PC-9 (cell line): ENCODE measurements at regions of chr3 and their contacts with region 1.

Region 1: DNA sequence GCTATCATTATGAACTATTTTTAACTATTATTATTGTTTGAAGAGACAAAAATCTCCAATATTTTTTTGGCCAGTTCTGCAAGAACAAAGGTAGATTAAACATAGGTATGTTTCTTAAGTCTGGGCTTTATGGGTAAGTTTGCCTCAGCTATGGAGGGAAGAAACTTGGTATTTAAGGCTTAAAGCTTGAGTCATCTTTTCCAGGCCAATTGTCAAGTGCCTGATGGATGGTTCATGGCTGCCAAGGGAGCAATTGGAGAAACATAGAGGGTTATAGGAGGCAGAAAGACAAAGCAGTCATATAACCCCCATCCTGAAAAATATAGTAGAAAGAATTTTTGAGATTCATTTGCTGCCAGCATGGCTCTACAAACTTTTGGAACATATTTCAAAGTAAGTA is 7.2 kb upstream of the STAC start:
- DNase-seq: peak; percentile 32 to 64
- H3K4me3 ChIP-seq: no peak overlapping the region
- H3K27ac ChIP-seq: peak overlapping the region; percentile 78
- H3K4me1 ChIP-seq: peaks cover 26% of the 10 kb centered on the region
- H3K27me3 ChIP-seq: no peaks in the 10 kb centered on the region
- CTCF ChIP-seq: no peak

Region 2: GRCh38 chr3:35760146-35760545 is 612.9 kb before region 1 on chr3:
- CTCF ChIA-PET with region 1: no interaction called
- POLR2A ChIA-PET with region 1: no interaction called
- intact Hi-C with region 1: no loop called
- DNase-seq: no peak
- H3K4me3 ChIP-seq: no peak overlapping the region
- H3K27ac ChIP-seq: no peak overlapping the region
- H3K4me1 ChIP-seq: no peaks in the 10 kb centered on the region
- H3K27me3 ChIP-seq: peaks cover 14% of the 10 kb centered on the region
- CTCF ChIP-seq: no peak

Region 3: DNA sequence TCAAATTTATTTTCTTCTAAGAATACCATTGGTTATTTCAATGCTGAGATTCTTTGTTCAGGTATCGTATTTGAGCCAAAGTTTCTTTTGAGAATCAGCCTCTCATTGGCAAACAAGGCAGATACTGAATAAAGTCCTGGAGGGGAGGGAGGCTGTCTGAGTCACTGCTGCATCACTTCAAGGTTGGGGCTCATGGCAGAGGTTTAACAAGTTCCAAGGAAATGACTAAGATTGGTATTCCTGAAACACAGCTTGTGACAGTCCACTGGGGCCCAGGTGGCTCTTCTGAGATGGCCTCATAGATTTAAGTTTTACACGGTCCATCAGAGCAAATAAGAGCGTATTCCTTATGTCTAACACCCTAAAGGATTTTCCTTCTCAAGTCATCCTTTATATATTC is 206.6 kb before region 1 on chr3:
- CTCF ChIA-PET with region 1: no interaction called
- POLR2A ChIA-PET with region 1: no interaction called
- intact Hi-C with region 1: no loop called
- DNase-seq: peak; percentile 62 to 87
- H3K4me3 ChIP-seq: peak overlapping the region; percentile 6; the same call in 1 of the 2 replicates
- H3K27ac ChIP-seq: peak overlapping the region; percentile 83
- H3K4me1 ChIP-seq: peaks cover 15% of the 10 kb centered on the region
- H3K27me3 ChIP-seq: no peaks in the 10 kb centered on the region
- CTCF ChIP-seq: no peak

Region 4: GRCh38 chr3:36257158-36257852 is 115.8 kb before region 1 on chr3:
- CTCF ChIA-PET with region 1: no interaction called
- POLR2A ChIA-PET with region 1: interaction called, 19 read pairs
- intact Hi-C with region 1: no loop called
- DNase-seq: no peak
- H3K4me3 ChIP-seq: no peak overlapping the region
- H3K27ac ChIP-seq: no peak overlapping the region
- H3K4me1 ChIP-seq: no peaks in the 10 kb centered on the region
- H3K27me3 ChIP-seq: no peaks in the 10 kb centered on the region
- CTCF ChIP-seq: no peak

Region 5: GRCh38 chr3:36403661-36404060 is 30.6 kb after region 1 on chr3:
- CTCF ChIA-PET with region 1: no interaction called
- POLR2A ChIA-PET with region 1: no interaction called
- intact Hi-C with region 1: loop called (anchors 2 kb)
- DNase-seq: no peak
- H3K4me3 ChIP-seq: no peak overlapping the region
- H3K27ac ChIP-seq: no peak overlapping the region
- H3K4me1 ChIP-seq: no peaks in the 10 kb centered on the region
- H3K27me3 ChIP-seq: no peaks in the 10 kb centered on the region
- CTCF ChIP-seq: no peak

Region 6: GRCh38 chr3:36457667-36458066 is 84.6 kb after region 1 on chr3:
- CTCF ChIA-PET with region 1: no interaction called
- POLR2A ChIA-PET with region 1: no interaction called
- intact Hi-C with region 1: no loop called
- DNase-seq: no peak
- H3K4me3 ChIP-seq: no peak overlapping the region
- H3K27ac ChIP-seq: no peak overlapping the region
- H3K4me1 ChIP-seq: no peaks in the 10 kb centered on the region
- H3K27me3 ChIP-seq: no peaks in the 10 kb centered on the region
- CTCF ChIP-seq: no peak

Region 7: DNA sequence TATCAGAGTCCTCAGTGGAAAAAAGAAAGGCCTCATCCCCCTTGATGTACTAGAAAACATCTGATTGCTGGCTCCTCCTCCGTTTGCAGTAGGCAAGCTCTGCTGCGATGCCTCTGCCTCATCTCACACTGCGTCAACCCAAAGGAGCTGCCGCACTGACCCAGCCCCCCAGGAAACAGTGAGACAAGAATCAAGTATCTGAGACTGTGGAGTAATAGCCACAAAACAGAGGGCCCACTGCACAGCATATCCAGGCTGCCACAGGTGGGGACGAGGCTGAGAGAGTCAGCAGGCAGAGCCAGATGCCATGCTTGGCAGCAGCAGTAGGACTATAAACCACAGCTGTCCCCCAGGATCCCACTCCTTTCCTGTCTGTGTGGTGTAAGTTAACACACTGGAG is 173.1 kb after region 1 on chr3:
- CTCF ChIA-PET with region 1: no interaction called
- POLR2A ChIA-PET with region 1: no interaction called
- intact Hi-C with region 1: no loop called
- DNase-seq: no peak
- H3K4me3 ChIP-seq: no peak overlapping the region
- H3K27ac ChIP-seq: no peak overlapping the region
- H3K4me1 ChIP-seq: no peaks in the 10 kb centered on the region
- H3K27me3 ChIP-seq: no peaks in the 10 kb centered on the region
- CTCF ChIP-seq: no peak

Region 8: GRCh38 chr3:36677331-36678007 is 304.4 kb after region 1 on chr3:
- CTCF ChIA-PET with region 1: no interaction called
- POLR2A ChIA-PET with region 1: no interaction called
- intact Hi-C with region 1: loop called (anchors 2 kb)
- DNase-seq: peak; percentile 78 to 99
- H3K4me3 ChIP-seq: no peak overlapping the region
- H3K27ac ChIP-seq: peak overlapping the region; percentile 98
- H3K4me1 ChIP-seq: peaks cover 33% of the 10 kb centered on the region
- H3K27me3 ChIP-seq: no peaks in the 10 kb centered on the region
- CTCF ChIP-seq: 0 out of 2 replicates have a peak, but pooled peaks have one; percentile 37